H1 (cell line): ENCODE measurements at regions of chr2 and their contacts with region 1.

Region 1: GRCh38 chr2:208175069-208175839 is 11.9 kb upstream of the CRYGA start:
- DNase-seq: peak; percentile 36 to 82
- H3K4me3 ChIP-seq: no peak overlapping the region
- H3K27ac ChIP-seq: no peak overlapping the region
- H3K4me1 ChIP-seq: peaks cover 0 to 2% (median 2%) of the 10 kb centered on the region in 4 experiments; a peak in 2 of 7 replicates
- H3K27me3 ChIP-seq: no peaks in the 10 kb centered on the region
- CTCF ChIP-seq: peak; percentile 81 to 91 (median 87)
- EP300 ChIP-seq: no peak
- POLR2A ChIP-seq: no peak
- RAD21 ChIP-seq: peak; percentile 81 to 86

Region 2: GRCh38 chr2:207902821-207903220 is 272.4 kb before region 1 on chr2:
- CTCF ChIA-PET with region 1: no interaction called
- POLR2A ChIA-PET with region 1: no interaction called
- DNase-seq: no peak
- H3K4me3 ChIP-seq: no peak overlapping the region
- H3K27ac ChIP-seq: no peak overlapping the region
- H3K4me1 ChIP-seq: peaks cover under 1 to 10% (median 4%) of the 10 kb centered on the region in 4 experiments; a peak in 5 of 7 replicates
- H3K27me3 ChIP-seq: no peaks in the 10 kb centered on the region
- CTCF ChIP-seq: no peak
- EP300 ChIP-seq: no peak
- POLR2A ChIP-seq: no peak
- RAD21 ChIP-seq: no peak

Region 3: GRCh38 chr2:207993151-207993763 is 182.0 kb before region 1 on chr2:
- CTCF ChIA-PET with region 1: no interaction called
- POLR2A ChIA-PET with region 1: no interaction called
- DNase-seq: no peak
- H3K4me3 ChIP-seq: no peak overlapping the region
- H3K27ac ChIP-seq: no peak overlapping the region
- H3K4me1 ChIP-seq: no peaks in the 10 kb centered on the region
- H3K27me3 ChIP-seq: no peaks in the 10 kb centered on the region
- CTCF ChIP-seq: no peak
- EP300 ChIP-seq: no peak
- POLR2A ChIP-seq: no peak
- RAD21 ChIP-seq: no peak

Region 4: DNA sequence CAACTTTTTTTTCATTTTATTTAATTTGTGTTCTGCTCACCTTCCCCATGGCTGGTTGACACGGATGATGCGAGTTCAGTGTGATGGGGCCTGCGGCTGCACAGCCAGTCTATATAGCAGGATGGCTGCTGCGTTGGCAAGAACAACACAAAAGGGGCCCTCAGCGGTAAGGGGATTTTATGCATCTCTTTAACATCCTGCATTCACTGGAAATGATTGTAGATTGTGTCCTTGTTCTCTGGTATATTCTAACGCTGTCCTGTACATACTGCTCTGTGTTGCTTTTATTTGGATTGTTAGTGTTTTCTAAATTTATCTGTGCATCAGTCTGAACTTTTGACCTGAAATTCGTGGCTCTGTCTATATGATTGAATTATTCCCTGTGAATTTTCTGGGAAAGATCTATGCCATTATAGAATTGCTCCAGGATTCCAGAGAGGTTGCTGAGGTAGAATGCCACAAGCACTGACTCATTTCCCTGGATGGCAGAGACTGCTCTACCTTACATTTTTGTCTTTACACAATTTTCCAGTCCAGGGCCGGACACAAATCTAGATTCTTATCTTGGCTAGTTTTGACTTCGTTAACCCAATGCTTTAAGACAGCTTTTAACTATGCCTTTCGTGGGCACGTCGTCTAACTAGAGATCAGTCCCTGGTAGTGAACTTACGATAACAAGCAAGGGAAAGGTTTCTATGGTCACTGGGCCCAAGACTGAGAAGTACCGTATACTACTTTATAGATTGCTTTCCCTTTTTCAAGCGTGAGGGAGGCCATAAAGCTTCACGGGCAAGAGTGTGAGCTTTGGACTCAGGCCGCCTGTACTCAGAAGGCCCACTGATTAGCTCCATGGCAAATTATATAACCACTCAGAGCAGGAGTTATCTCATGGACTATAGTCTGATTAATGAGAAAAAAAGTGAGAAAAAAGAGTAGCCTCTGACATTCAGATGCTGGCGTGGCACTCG is 45.2 kb before region 1 on chr2 and contains the start of gene CRYGC:
- CTCF ChIA-PET with region 1: interaction called, 17 read pairs
- POLR2A ChIA-PET with region 1: interaction called, 3 read pairs
- DNase-seq: no peak
- H3K4me3 ChIP-seq: no peak within 1 kb of the TSS
- H3K27ac ChIP-seq: no peak within 1 kb of the TSS
- H3K4me1 ChIP-seq: no peaks in the 10 kb centered on the region
- H3K27me3 ChIP-seq: no peaks in the 10 kb centered on the region
- CTCF ChIP-seq: no peak
- EP300 ChIP-seq: no peak
- POLR2A ChIP-seq: no peak
- RAD21 ChIP-seq: no peak
- total RNA-seq, gene CRYGC: not detected in 2 replicates

Region 5: DNA sequence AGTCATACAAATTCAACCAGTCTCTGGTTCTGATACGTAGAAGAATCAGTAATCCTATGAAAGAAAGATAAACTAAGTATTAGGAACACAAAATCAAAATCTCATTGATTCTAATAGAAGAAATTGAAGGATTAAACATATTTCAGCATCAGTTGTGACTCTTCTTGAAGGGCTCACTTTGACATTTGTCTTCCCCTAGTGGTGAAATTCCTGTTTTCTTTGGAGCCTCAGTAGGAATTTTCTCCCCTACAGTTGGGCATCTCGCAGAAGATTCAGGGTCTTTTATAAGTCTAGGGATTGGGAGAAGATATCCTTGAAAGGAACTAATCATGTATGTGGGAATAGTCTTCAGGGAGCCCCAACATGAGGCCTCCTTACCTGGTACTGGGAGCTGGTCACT is 26.5 kb before region 1 on chr2:
- CTCF ChIA-PET with region 1: interaction called, 56 read pairs
- POLR2A ChIA-PET with region 1: no interaction called
- DNase-seq: no peak
- H3K4me3 ChIP-seq: no peak overlapping the region
- H3K27ac ChIP-seq: no peak overlapping the region
- H3K4me1 ChIP-seq: 0 out of 7 replicates have a peak, but pooled peaks cover 0 to 3% (median 0%) of the 10 kb centered on the region in 4 experiments
- H3K27me3 ChIP-seq: no peaks in the 10 kb centered on the region; a peak in 1 of 7 replicates
- CTCF ChIP-seq: peak in 2 of 3 experiments; percentile 43 to 50; a peak in 2 of 4 replicates
- EP300 ChIP-seq: no peak
- POLR2A ChIP-seq: no peak
- RAD21 ChIP-seq: peak; percentile 33 to 43; a peak in 3 of 4 replicates

Region 6: DNA sequence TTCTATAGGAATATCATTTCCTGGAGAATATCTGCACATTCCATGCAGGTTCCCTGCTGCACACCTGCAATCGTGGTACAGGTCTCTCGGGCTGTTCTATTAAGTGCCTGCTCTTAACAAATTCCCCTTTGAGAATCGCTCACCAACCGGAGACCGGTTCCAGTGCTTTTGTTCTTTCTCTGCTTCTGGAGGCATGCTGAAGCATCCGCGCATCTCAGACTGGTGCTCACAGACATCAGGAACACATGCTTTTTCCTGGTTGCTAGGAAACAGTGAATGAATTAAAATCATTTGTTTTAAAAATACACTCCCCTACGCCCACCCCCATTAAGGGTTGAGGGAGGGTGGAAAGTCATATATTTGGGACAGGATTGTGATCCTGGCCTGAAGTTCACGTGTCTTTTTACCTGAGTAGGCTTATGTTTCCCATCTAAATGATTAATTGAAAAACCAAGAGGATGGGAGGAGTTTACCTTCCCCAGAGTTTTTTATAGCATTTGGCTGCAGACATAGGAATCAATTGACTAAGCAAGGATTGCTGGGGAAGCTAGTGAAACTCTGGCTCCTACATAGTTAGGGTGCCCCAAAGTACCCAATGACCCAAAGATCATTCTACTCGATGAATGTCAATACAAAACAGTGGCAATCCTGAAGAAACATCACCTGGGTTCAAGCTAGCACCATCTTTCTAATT is 14.7 kb after region 1 on chr2 and contains the start of gene C2orf80:
- CTCF ChIA-PET with region 1: interaction called, 43 read pairs
- POLR2A ChIA-PET with region 1: no interaction called
- DNase-seq: no peak
- H3K4me3 ChIP-seq: no peak within 1 kb of the TSS
- H3K27ac ChIP-seq: no peak within 1 kb of the TSS
- H3K4me1 ChIP-seq: peaks cover 3 to 11% (median 6%) of the 10 kb centered on the region in 4 experiments; a peak in 5 of 7 replicates
- H3K27me3 ChIP-seq: no peaks in the 10 kb centered on the region
- CTCF ChIP-seq: no peak
- EP300 ChIP-seq: no peak
- POLR2A ChIP-seq: no peak
- RAD21 ChIP-seq: no peak
- total RNA-seq, gene C2orf80: 1.1 and 1.3 TPM in 2 replicates

Region 7: DNA sequence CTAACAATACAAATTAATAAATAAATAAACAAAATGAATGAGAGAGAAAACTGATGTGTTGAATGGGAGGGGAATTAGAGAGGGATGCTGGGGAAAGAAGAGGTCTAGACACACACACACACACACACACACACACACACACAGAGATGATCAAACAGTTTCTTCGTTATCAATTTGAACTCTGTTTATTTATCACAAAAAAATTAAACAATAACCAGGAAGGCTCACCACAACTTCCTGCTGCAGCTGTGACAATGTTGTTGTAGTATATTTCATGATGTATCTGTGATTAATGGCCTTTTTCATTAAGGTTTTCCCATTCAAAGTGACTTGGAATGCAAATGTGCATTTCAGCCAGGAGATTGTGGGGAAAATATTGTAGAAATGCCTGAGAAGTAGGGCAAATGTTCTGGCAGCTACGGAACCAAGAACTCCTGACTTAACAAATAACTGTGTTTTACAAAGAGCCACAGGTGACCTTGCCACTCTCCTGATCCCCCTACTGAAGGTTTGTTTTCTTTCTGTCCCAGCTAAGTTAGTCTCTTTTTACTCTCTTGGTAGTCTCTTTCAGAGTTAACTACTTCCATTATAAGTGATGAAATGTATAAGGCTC is 38.4 kb after region 1 on chr2:
- CTCF ChIA-PET with region 1: interaction called, 20 read pairs
- POLR2A ChIA-PET with region 1: no interaction called
- DNase-seq: no peak
- H3K4me3 ChIP-seq: no peak overlapping the region
- H3K27ac ChIP-seq: no peak overlapping the region
- H3K4me1 ChIP-seq: 0 out of 7 replicates have a peak, but pooled peaks cover 0 to 2% (median 0%) of the 10 kb centered on the region in 4 experiments
- H3K27me3 ChIP-seq: no peaks in the 10 kb centered on the region
- CTCF ChIP-seq: no peak
- EP300 ChIP-seq: no peak
- POLR2A ChIP-seq: no peak
- RAD21 ChIP-seq: no peak

Region 8: DNA sequence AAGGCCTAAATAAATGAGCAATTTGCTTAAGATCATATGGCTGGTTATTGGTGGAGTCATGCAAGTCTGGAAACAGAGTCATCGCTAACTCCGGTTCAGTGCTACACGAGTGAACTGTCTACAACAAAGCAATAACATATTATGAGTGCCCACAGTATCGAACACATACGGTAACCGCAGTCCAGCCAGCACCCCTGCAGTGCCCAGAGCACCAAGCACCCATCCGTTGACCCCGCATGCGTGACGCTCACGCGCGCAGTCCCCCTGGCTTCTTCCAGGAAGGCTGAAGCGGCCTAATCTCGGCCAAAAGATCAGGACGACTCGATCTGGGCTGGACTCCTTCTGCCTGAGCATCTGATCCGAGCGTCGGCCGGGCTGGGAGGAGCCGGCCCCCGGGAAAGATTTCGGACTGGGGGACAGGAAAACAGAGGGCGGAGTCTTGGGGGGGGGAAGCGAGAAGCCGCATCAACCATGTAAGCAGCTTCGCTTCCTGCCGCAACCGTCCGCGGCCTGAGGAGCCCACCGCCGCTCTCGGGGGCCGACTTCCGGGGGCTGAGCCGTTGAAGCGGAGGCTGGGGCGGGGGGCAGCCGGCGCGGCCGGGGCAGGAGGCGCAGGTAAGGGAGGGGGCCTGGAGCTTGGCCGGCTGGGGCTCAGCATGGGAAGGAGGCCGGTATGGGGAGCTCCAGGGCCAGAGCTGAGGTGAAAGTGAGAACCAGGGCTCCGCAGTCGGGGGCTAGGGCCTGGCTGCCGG is 90.7 kb after region 1 on chr2 and contains the start of gene PIKFYVE:
- CTCF ChIA-PET with region 1: interaction called, 11 read pairs
- POLR2A ChIA-PET with region 1: no interaction called
- DNase-seq: peak; percentile 92 to 93
- H3K4me3 ChIP-seq: peak within 1 kb of the TSS; percentile 85 to 87 (median 86)
- H3K27ac ChIP-seq: peak within 1 kb of the TSS; percentile 50
- H3K4me1 ChIP-seq: peaks cover 0 to 8% (median 4%) of the 10 kb centered on the region in 4 experiments; a peak in 5 of 7 replicates
- H3K27me3 ChIP-seq: no peaks in the 10 kb centered on the region
- CTCF ChIP-seq: no peak
- EP300 ChIP-seq: peak in 1 of 2 experiments; percentile 56; a peak in 1 of 3 replicates
- POLR2A ChIP-seq: peak; percentile 52 to 64
- RAD21 ChIP-seq: no peak
- total RNA-seq, gene PIKFYVE: 33.5 and 35.8 TPM in 2 replicates